HepG2 (cell line): ENCODE measurements at regions of chr7 and their contacts with region 1.

Region 1: GRCh38 chr7:128209229-128210035 is 31.6 kb upstream of the LEP start:
- DNase-seq: peak; percentile 66
- ATAC-seq: peak; percentile 81
- H3K4me3 ChIP-seq: no peak overlapping the region
- H3K27ac ChIP-seq: no peak overlapping the region
- H3K4me1 ChIP-seq: 0 out of 2 replicates have a peak, but pooled peaks cover 11% of the 10 kb centered on the region
- H3K27me3 ChIP-seq: peaks cover 0 to 69% of the 10 kb centered on the region in 2 experiments; a peak in 4 of 5 replicates
- CTCF ChIP-seq: peak; percentile 99
- EP300 ChIP-seq: no peak
- POLR2A ChIP-seq: no peak
- RAD21 ChIP-seq: peak; percentile 95

Region 2: DNA sequence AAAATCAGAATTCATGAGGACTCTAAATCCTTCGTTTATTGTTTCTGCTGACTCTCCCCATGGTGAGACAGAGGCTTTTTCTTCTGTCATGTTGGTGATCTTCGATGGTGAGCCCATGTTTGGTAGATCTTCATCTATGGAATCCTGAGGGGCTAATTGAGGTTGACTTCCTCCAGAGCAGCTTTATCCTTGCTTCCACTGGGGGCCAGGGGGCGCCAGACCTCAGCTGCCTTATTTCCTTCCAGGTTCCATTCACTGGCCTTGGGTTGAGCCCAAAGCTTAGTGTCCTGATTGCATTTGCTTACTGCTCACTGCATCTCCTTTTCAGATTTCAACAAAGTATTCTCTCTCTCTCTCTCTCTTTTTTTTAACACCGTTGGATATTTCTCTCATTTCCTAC is 704.7 kb before region 1 on chr7:
- CTCF ChIA-PET with region 1: interaction called, 3 read pairs
- POLR2A ChIA-PET with region 1: no interaction called
- in situ Hi-C with region 1: no loop called
- intact Hi-C with region 1: loop called (anchors 10 kb)
- DNase-seq: peak; percentile 22
- ATAC-seq: peak; percentile 84
- H3K4me3 ChIP-seq: no peak overlapping the region
- H3K27ac ChIP-seq: no peak overlapping the region
- H3K4me1 ChIP-seq: no peaks in the 10 kb centered on the region
- H3K27me3 ChIP-seq: no peaks in the 10 kb centered on the region; a peak in 1 of 5 replicates
- CTCF ChIP-seq: peak; percentile 67
- EP300 ChIP-seq: no peak
- POLR2A ChIP-seq: no peak
- RAD21 ChIP-seq: no peak

Region 3: GRCh38 chr7:127708788-127709187 is 500.6 kb before region 1 on chr7:
- CTCF ChIA-PET with region 1: interaction called, 25 read pairs
- POLR2A ChIA-PET with region 1: interaction called, 5 read pairs
- in situ Hi-C with region 1: loop called (anchors 5 kb)
- intact Hi-C with region 1: loop called (anchors 1 kb)
- DNase-seq: peak; percentile 57
- ATAC-seq: peak; percentile 86
- H3K4me3 ChIP-seq: no peak overlapping the region
- H3K27ac ChIP-seq: no peak overlapping the region
- H3K4me1 ChIP-seq: no peaks in the 10 kb centered on the region
- H3K27me3 ChIP-seq: no peaks in the 10 kb centered on the region
- CTCF ChIP-seq: peak; percentile 75
- EP300 ChIP-seq: no peak
- POLR2A ChIP-seq: no peak
- RAD21 ChIP-seq: no peak

Region 4: DNA sequence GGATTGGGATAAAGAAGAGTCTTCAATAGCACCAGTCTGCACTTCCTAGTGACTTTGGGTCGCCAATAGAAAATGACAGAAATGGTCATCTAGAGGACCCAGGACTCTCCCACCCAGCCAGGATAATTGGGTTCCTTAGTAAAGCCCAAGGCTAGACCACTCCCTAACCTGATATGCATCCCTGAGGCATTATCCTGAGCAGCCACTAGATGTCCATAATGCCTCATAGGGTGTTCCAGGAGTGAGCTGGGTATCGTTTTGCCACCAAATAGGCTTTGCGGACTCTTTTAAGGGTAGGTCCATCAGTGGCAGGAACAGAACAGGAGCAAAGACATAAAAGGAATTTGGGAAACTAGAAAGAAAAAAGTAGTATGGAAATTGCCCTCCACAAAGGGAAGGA is 173.7 kb before region 1 on chr7:
- CTCF ChIA-PET with region 1: no interaction called
- POLR2A ChIA-PET with region 1: no interaction called
- in situ Hi-C with region 1: no loop called
- intact Hi-C with region 1: loop called (anchors 5 kb)
- DNase-seq: peak; percentile 21
- ATAC-seq: peak; percentile 78
- H3K4me3 ChIP-seq: no peak overlapping the region
- H3K27ac ChIP-seq: no peak overlapping the region
- H3K4me1 ChIP-seq: no peaks in the 10 kb centered on the region
- H3K27me3 ChIP-seq: no peaks in the 10 kb centered on the region
- CTCF ChIP-seq: peak; percentile 47
- EP300 ChIP-seq: no peak
- POLR2A ChIP-seq: no peak
- RAD21 ChIP-seq: no peak

Region 5: GRCh38 chr7:128135515-128136214 is 73.8 kb before region 1 on chr7:
- CTCF ChIA-PET with region 1: interaction called, 36 read pairs
- POLR2A ChIA-PET with region 1: no interaction called
- in situ Hi-C with region 1: loop called (anchors 5 kb)
- intact Hi-C with region 1: loop called (anchors 1 kb)
- DNase-seq: no peak
- ATAC-seq: peak; percentile 95
- H3K4me3 ChIP-seq: peak overlapping the region; percentile 41 to 72 (median 49)
- H3K27ac ChIP-seq: no peak overlapping the region
- H3K4me1 ChIP-seq: peaks cover 14% of the 10 kb centered on the region
- H3K27me3 ChIP-seq: peaks cover 2 to 53% of the 10 kb centered on the region in 2 experiments; a peak in 4 of 5 replicates
- CTCF ChIP-seq: peak; percentile 77
- EP300 ChIP-seq: no peak
- POLR2A ChIP-seq: no peak
- RAD21 ChIP-seq: peak; percentile 87

Region 6: DNA sequence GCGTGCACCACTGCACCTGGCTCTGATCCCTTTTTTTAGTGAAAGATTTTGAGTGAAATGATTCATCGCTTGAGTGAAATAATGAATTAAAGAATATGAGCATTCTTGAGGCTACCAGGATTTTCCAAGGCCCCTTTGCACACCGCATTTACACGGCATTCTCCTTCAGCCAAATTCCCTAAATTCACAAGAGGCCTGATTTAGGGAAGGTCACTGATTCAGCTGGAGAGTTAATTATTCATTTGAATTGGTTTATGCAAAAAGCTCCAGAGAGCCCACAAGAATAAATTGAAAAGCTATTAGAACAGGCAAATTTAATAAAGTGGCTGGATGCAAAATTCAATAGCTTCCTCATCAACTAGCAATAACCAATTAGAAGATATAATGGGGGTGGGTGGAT is 78.1 kb after region 1 on chr7:
- CTCF ChIA-PET with region 1: no interaction called
- POLR2A ChIA-PET with region 1: no interaction called
- in situ Hi-C with region 1: no loop called
- intact Hi-C with region 1: no loop called
- DNase-seq: no peak
- ATAC-seq: no peak
- H3K4me3 ChIP-seq: no peak overlapping the region
- H3K27ac ChIP-seq: no peak overlapping the region
- H3K4me1 ChIP-seq: no peaks in the 10 kb centered on the region
- H3K27me3 ChIP-seq: no peaks in the 10 kb centered on the region
- CTCF ChIP-seq: no peak
- EP300 ChIP-seq: no peak
- POLR2A ChIP-seq: no peak
- RAD21 ChIP-seq: no peak